ENCODE measurements at regions of chr12 and their contacts with region 1.

Region 1: DNA sequence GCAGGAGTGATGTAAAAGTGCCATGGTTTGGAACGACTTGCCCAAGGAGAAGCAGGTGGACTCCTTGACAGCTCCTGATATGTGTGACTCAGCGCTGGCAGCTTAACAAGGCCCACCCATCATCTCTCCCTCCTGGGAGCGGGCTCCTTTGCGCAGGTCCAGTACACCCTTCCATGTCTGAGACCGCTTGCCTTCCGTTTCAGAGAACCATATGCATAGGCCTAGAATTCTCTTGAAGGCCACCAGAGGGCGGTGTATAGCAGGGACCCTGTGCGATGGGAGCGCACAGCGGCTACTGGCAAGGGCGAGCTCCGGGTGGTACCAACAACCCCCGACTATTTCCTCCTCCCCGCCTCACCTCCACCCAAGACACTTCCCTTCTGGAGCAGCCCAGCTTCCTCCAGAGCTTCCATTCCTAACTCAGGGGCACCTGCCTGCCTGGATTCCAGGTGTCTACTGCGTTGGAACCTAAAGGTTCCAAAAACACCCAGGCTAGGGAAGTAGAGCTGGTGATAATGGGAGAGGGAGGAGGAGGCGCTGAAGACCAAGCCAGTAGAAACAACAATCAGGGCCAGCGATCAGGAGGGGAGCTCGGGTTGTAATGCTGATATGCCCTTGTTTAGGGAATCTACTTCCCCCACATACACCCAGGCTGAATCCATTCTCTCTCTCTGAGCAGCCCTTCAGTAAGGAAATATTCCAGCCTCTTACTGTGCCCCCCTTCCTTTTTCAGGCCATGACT is 6.2 kb downstream of the DHH start:
- DNase-seq: peak; percentile 86
- ATAC-seq: peak; percentile 87
- H3K4me3 Mint-ChIP-seq: no peak overlapping the region
- H3K27ac Mint-ChIP-seq: peak overlapping the region; percentile 31
- H3K4me1 Mint-ChIP-seq: peaks cover 64% of the 10 kb centered on the region
- H3K27me3 Mint-ChIP-seq: peaks cover 41% of the 10 kb centered on the region

Region 2: DNA sequence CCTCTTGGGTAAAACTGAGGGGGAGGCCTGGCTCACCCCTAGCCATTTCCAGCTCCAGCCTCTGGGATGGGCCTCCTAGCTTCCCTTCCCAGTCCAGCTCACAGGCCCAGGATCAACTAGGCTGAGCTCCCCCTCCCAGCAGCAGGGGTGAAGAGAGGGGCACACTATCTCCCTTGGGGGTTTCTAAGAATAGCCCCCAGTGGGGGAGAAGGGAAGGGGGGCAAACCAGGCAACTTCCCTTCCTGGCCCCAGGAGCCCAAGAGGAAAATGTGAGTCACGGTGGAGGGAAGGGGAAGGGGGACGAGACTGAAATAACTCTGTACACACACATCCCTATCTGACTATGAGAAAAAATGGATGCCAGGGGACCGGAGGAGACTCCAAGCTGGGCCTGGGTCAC is 308.5 kb before region 1 on chr12:
- CTCF ChIA-PET with region 1: no interaction called
- POLR2A ChIA-PET with region 1: no interaction called
- DNase-seq: no peak
- ATAC-seq: no peak
- H3K4me3 Mint-ChIP-seq: no peak overlapping the region
- H3K27ac Mint-ChIP-seq: no peak overlapping the region
- H3K4me1 Mint-ChIP-seq: no peaks in the 10 kb centered on the region
- H3K27me3 Mint-ChIP-seq: peaks cover 10% of the 10 kb centered on the region

Region 3: DNA sequence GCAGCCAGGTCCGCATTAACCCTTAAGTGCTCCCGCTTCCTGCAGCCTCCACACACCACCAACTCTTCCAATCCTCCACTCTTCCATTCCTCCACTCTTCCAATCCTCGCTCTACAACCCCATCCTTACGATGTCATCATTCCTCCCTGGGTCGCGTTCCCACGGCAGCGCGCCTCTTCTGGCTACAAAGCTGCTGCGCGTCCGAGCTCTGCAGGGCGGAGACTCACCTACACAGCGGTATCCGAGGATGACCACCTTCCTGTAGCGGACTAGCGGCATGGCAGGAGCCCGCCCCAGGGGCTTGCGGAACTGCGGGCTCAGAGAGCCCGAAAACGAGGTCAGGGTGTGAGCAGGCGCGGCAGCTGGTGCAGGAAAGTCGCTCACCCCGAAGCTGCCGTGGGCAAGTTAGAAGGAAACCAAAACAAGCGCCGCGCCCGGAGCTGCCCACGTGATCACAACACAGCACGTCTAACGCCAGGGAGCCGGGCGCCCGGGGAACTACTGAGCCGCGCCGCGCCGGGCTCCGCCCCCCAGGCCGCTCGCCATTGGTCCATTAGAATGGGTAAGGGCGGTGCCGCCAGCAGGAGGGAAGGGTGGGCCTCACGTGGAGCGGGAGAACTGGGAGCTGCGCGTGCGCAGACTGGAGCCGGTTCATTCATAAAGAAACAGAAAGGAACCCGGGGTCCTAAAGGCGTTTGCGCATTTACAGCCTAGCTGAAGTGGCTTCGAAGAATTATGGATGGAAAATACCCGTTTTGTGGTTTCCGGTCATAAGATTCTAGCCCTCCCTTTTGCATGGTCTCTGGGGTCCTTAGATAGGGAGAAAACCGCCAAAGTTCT is 18.6 kb before region 1 on chr12 and contains the start of gene RHEBL1:
- CTCF ChIA-PET with region 1: interaction called, 242 read pairs
- POLR2A ChIA-PET with region 1: interaction called, 5 read pairs
- DNase-seq: peak; percentile 100
- ATAC-seq: peak; percentile 100
- H3K4me3 Mint-ChIP-seq: peak within 1 kb of the TSS; percentile 100
- H3K27ac Mint-ChIP-seq: peak within 1 kb of the TSS; percentile 97
- H3K4me1 Mint-ChIP-seq: peaks cover 31% of the 10 kb centered on the region
- H3K27me3 Mint-ChIP-seq: no peaks in the 10 kb centered on the region
- total RNA-seq, gene RHEBL1: 9.5 to 9.9 TPM

Region 4: GRCh38 chr12:49110464-49111155 is 22.2 kb after region 1 on chr12 and contains the start of gene LMBR1L:
- CTCF ChIA-PET with region 1: interaction called, 179 read pairs
- POLR2A ChIA-PET with region 1: interaction called, 9 read pairs
- DNase-seq: peak; percentile 99
- ATAC-seq: peak; percentile 99
- H3K4me3 Mint-ChIP-seq: peak within 1 kb of the TSS; percentile 97
- H3K27ac Mint-ChIP-seq: peak within 1 kb of the TSS; percentile 79
- H3K4me1 Mint-ChIP-seq: peaks cover 29% of the 10 kb centered on the region
- H3K27me3 Mint-ChIP-seq: no peaks in the 10 kb centered on the region
- total RNA-seq, gene LMBR1L: 35.8 to 37.8 TPM

Region 5: DNA sequence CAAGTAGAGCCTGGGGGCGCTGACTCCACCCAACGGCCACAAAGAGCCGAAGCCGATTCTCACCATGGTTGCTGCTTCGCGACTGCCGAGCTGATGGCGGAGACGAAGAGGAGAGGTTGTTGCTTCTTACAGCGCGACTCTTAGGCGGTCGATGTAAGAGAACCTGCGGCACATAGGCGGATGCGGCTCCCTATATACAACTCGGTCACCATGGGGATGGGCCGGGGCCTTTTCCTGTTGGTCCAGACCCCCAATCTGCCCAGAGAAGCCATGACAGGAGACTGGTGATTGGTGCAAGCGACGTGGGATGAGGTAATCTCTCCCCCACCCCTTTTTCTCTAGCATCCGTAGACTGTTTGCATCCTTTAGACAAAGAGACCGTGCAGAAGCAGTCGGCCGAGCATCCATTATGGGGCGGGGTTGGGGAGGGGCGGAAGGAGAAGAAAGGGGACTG is 100.6 kb after region 1 on chr12 and contains the start of gene TUBA1A:
- CTCF ChIA-PET with region 1: interaction called, 11 read pairs
- POLR2A ChIA-PET with region 1: interaction called, 3 read pairs
- DNase-seq: peak; percentile 99
- ATAC-seq: peak; percentile 89
- H3K4me3 Mint-ChIP-seq: peak within 1 kb of the TSS; percentile 88
- H3K27ac Mint-ChIP-seq: peak within 1 kb of the TSS; percentile 95
- H3K4me1 Mint-ChIP-seq: peaks cover 17% of the 10 kb centered on the region
- H3K27me3 Mint-ChIP-seq: peaks cover 4% of the 10 kb centered on the region
- total RNA-seq, gene TUBA1A: 117 to 120 TPM

Region 6: GRCh38 chr12:49264738-49265515 is 176.6 kb after region 1 on chr12 and contains the start of gene TUBA1C:
- CTCF ChIA-PET with region 1: interaction called, 14 read pairs
- POLR2A ChIA-PET with region 1: interaction called, 3 read pairs
- DNase-seq: peak; percentile 94
- ATAC-seq: peak; percentile 88
- H3K4me3 Mint-ChIP-seq: peak within 1 kb of the TSS; percentile 99
- H3K27ac Mint-ChIP-seq: peak within 1 kb of the TSS; percentile 99
- H3K4me1 Mint-ChIP-seq: peaks cover 47% of the 10 kb centered on the region
- H3K27me3 Mint-ChIP-seq: no peaks in the 10 kb centered on the region
- total RNA-seq, gene TUBA1C: 308 to 324 TPM

Measured in activated CD8-positive, alpha-beta T cell treated with anti-CD3 and anti-CD28 coated beads, Interleukin-2, amount 10 ng/mL, durations not matched to agents 7 days and 5 days (primary cell).